ENCODE measurements at regions of chr3 and their contacts with region 1.

Region 1: GRCh38 chr3:11060500-11061251 is 68.1 kb downstream of the SLC6A1 start:
- DNase-seq: peak; percentile 59 to 84 (median 76)
- H3K4me3 ChIP-seq: no peak overlapping the region
- H3K27ac ChIP-seq: no peak overlapping the region
- H3K4me1 ChIP-seq: peaks cover 2% of the 10 kb centered on the region
- H3K27me3 ChIP-seq: no peaks in the 10 kb centered on the region
- CTCF ChIP-seq: peak; percentile 86 to 92 (median 86)
- EP300 ChIP-seq: no peak
- POLR2A ChIP-seq: no peak

Region 2: DNA sequence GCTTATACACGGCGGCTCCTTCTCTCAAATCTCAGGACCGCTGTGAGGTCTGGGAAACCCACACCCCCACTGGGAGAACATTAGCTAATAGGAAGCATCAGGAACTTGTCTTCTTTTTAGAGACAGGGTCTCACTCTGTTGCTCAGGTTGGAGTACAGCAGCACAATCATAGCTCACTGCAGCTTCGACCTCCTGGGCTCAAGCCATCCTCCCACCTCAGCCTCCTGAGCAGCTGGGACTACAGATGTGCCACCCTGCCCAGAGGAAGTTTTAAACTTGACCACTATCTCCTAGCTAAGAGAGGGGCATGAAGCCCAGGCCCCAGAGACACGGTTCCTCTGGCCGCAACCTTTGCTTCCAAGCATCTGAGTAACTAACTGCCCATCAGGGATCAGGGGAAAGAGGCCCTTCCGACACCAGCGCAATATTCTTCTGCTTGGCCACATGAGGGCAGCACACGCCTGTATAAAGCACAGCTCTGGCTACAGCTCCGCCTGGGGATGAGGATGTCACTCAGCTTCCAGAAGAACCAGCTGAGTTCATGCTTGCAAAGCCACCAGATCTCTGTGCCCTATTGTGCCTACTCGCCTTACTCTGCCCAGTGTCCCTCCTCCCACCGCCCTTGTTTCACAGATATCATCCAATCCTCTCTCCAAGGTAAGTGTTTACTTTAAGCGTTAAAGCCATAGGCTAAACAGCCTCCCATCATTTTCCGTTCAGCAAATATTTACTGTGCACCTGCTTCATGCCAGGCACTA is 302.2 kb before region 1 on chr3:
- intact Hi-C with region 1: loop called in 3 of 4 experiments (anchors 1 to 5 kb)
- DNase-seq: peak in 4 of 5 donors; percentile 24 to 45 (median 32)
- H3K4me3 ChIP-seq: no peak overlapping the region
- H3K27ac ChIP-seq: no peak overlapping the region
- H3K4me1 ChIP-seq: no peaks in the 10 kb centered on the region
- H3K27me3 ChIP-seq: no peaks in the 10 kb centered on the region
- CTCF ChIP-seq: peak in 1 of 3 donors; percentile 20
- EP300 ChIP-seq: no peak
- POLR2A ChIP-seq: no peak

Region 3: DNA sequence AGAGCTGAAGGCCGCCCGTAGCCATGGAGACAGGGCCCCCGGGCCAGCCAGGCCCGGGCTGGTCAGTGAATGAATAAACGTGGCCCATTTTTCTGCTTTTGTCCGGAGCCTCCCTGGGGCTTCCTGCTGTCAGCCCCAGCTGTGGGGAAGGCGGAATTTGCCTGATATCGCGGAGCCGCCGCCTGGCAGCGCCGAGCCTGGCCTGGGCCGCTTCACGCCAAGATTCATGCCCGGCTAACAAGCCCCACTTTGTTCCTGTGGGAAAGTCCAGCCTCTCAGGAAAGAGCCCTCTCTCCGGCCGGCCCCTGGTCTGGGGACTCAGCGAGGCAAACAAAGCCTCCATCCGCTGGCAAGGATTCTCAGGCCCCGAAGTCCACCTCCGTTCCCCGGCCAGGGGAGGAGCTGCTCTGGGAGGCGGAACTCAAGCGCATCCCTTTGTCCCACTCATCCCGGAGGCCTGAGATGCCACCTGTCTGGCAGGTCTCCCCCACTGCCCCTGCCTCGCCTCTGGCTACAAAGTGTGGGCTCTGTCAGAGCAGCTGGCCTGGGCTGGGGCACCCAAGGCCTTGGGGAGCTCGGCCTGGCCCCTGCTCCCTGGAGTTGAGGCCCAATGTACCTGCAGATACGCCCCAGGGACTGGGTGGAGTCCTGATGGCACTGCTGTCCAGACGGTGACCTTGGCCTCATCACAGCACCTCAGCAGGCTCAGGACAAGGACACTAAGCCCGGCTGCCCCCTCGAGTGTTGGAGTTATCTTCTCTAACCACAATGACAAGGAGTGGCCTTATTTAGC is 296.2 kb before region 1 on chr3:
- intact Hi-C with region 1: loop called in 2 of 4 experiments (anchors 5 kb)
- DNase-seq: no peak
- H3K4me3 ChIP-seq: no peak overlapping the region
- H3K27ac ChIP-seq: no peak overlapping the region
- H3K4me1 ChIP-seq: no peaks in the 10 kb centered on the region
- H3K27me3 ChIP-seq: no peaks in the 10 kb centered on the region
- CTCF ChIP-seq: no peak
- EP300 ChIP-seq: no peak
- POLR2A ChIP-seq: no peak

Region 4: DNA sequence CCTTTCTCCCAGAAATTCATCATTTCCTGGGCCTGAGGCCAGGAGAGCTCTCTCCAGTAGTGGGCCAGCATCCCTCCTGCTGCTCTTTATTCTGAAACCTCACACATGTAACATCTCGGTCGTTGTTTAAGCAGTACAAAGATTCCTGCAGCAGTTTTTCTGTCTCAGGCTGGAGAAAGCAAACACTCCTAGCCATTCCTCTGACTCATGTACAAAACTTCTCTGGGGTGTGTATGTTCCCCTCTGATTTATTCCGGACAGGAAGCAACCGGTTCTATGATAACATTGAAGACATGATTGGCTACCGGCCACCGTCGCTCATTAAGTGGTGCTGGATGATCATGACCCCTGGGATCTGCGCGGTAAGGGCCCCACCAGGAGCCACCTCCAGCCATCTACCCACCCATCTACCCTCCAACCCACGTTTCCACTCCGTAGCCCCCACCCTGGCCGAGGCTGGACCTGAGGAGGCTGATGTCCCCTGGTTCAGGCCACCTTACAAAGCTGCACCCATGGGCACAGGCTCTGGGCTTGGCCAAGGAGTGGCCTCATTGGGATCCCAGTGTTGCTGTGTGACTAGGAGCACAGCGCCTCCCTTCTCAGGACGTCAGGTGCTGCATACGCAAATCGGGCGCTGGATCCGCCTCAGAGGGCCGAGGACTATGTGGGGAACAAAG is 126.7 kb before region 1 on chr3:
- intact Hi-C with region 1: no loop called
- DNase-seq: peak in 1 of 5 donors; percentile 56
- H3K4me3 ChIP-seq: no peak overlapping the region
- H3K27ac ChIP-seq: no peak overlapping the region
- H3K4me1 ChIP-seq: peaks cover 4% of the 10 kb centered on the region
- H3K27me3 ChIP-seq: no peaks in the 10 kb centered on the region
- CTCF ChIP-seq: no peak
- EP300 ChIP-seq: no peak
- POLR2A ChIP-seq: no peak

Region 5: GRCh38 chr3:10945683-10946287 is 114.9 kb before region 1 on chr3:
- intact Hi-C with region 1: loop called (anchors 2 to 5 kb)
- DNase-seq: peak; percentile 37 to 77 (median 59)
- H3K4me3 ChIP-seq: no peak overlapping the region
- H3K27ac ChIP-seq: no peak overlapping the region
- H3K4me1 ChIP-seq: no peaks in the 10 kb centered on the region
- H3K27me3 ChIP-seq: no peaks in the 10 kb centered on the region
- CTCF ChIP-seq: peak; percentile 55 to 60 (median 59)
- EP300 ChIP-seq: no peak
- POLR2A ChIP-seq: no peak

Region 6: DNA sequence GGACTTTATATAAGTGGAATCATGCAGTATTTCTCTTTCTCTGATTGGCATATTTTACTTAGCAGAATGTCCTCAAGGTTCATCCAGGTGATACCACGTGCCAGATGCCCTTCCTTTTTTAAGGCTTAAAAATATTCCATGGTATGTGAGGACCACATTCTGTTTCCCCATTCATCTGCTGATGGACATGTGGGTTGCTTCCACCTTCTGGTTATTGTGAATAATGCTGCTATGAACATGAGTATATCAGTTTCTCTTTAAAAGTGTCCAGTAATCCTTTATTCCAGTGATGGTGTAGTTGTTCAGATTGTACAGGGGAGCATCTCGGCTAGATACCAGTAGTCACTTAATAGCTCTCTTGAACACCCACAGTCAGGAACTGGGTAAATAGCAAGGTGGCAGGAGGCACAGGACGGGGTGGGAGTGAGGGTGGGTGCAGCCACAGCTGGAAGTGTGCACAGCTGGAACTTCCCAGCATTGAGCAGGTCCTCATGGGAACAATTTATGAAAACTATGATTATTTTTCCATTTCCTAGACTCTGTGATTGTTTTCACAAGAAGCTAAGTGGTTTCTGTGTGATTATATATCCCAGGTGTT is 161.2 kb after region 1 on chr3:
- intact Hi-C with region 1: loop called in 1 of 4 experiments (anchors 10 kb)
- DNase-seq: no peak
- H3K4me3 ChIP-seq: no peak overlapping the region
- H3K27ac ChIP-seq: no peak overlapping the region
- H3K4me1 ChIP-seq: no peaks in the 10 kb centered on the region
- H3K27me3 ChIP-seq: no peaks in the 10 kb centered on the region
- CTCF ChIP-seq: no peak
- EP300 ChIP-seq: no peak
- POLR2A ChIP-seq: no peak

Region 7: DNA sequence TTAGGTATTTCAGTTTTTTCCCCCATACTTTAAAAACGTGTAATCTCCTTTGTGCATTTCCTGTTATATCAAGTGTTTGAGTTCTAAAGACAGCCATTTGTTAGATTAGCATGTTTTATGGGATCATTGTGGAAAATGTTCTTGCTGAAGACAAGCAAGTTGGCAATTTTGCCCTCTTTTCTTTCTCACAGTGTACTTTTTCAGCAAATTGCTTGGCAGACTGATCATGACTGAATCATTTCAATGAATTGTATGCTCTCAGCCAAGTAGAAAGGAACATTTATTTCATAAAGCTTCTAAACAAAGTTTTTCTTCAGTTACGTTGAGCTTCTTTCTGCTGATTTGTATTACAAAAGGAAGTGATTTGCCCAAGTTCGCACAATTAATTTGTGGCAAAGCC is 263.1 kb after region 1 on chr3:
- intact Hi-C with region 1: loop called in 1 of 4 experiments (anchors 10 kb)
- DNase-seq: no peak
- H3K4me3 ChIP-seq: no peak overlapping the region
- H3K27ac ChIP-seq: no peak overlapping the region
- H3K4me1 ChIP-seq: no peaks in the 10 kb centered on the region
- H3K27me3 ChIP-seq: no peaks in the 10 kb centered on the region
- CTCF ChIP-seq: no peak
- EP300 ChIP-seq: no peak
- POLR2A ChIP-seq: no peak

Region 8: GRCh38 chr3:11335056-11335608 is 274.5 kb after region 1 on chr3:
- intact Hi-C with region 1: loop called in 2 of 4 experiments (anchors 5 kb)
- DNase-seq: no peak
- H3K4me3 ChIP-seq: no peak overlapping the region
- H3K27ac ChIP-seq: no peak overlapping the region
- H3K4me1 ChIP-seq: no peaks in the 10 kb centered on the region
- H3K27me3 ChIP-seq: no peaks in the 10 kb centered on the region
- CTCF ChIP-seq: peak; percentile 42 to 72 (median 68)
- EP300 ChIP-seq: no peak
- POLR2A ChIP-seq: no peak

Region 9: DNA sequence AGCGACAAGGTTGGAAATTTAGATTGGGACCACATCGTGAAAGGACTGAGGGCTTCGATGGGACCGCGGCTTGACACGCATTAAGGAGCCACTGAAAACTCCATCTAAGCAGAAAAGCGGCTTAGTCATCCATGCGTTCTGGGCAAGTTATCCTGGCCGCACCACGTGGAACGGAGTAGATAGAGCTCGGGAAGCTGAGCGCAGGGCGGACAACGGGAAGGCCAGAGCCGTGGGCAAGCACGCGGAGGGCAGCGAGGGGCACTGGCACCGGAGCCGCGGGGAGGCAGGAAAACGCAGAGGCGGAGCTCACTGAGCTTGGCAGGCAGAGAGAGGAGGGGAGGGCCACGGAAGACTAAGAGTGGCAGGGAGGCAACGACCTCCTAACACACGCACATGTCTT is 644.4 kb after region 1 on chr3:
- intact Hi-C with region 1: no loop called
- DNase-seq: no peak
- H3K4me3 ChIP-seq: no peak overlapping the region
- H3K27ac ChIP-seq: no peak overlapping the region
- H3K4me1 ChIP-seq: peaks cover 1% of the 10 kb centered on the region
- H3K27me3 ChIP-seq: no peaks in the 10 kb centered on the region
- CTCF ChIP-seq: no peak
- EP300 ChIP-seq: no peak
- POLR2A ChIP-seq: no peak